ENCODE measurements at regions of chr10 and their contacts with region 1.

Region 1: GRCh38 chr10:17430647-17431355 is 23.6 kb downstream of the ST8SIA6 start:
- DNase-seq: no peak
- H3K4me3 ChIP-seq: no peak overlapping the region
- H3K27ac ChIP-seq: no peak overlapping the region
- H3K4me1 ChIP-seq: peaks cover 0 to 6% (median 4%) of the 10 kb centered on the region in 4 donors
- H3K27me3 ChIP-seq: peaks cover 0 to 40% (median 0%) of the 10 kb centered on the region in 4 donors
- CTCF ChIP-seq: peak; percentile 74 to 92 (median 79)
- EP300 ChIP-seq: no peak
- POLR2A ChIP-seq: no peak

Region 2: DNA sequence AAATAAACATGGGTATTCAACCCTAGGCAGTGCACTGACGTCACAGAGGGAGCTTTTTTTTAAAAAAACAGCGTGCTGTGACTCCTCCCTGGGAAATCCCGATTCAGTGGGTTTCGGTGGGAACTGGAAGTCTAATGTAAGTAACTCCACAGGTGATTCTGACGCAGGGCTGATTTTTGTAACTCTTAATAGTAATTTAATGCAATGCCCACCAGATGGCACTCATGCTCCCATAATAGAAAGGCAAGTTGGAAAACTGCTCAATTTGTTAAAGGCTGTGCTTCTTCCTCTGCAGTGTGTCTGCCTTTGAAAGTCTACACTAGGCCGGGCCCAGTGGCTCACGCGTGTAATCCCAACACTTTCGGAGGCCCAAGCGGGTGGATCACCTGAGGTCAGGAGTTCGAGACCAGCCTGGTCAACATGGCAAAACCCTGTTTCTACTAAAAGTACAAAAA is 602.7 kb before region 1 on chr10:
- intact Hi-C with region 1: loop called (anchors 5 kb)
- DNase-seq: no peak
- H3K4me3 ChIP-seq: peak overlapping the region in 1 of 4 donors; percentile 12
- H3K27ac ChIP-seq: peak overlapping the region in 3 of 4 donors; percentile 35 to 62 (median 53)
- H3K4me1 ChIP-seq: peaks cover 9 to 25% (median 21%) of the 10 kb centered on the region in 4 donors
- H3K27me3 ChIP-seq: no peaks in the 10 kb centered on the region
- CTCF ChIP-seq: peak; percentile 47 to 68 (median 47)
- EP300 ChIP-seq: no peak
- POLR2A ChIP-seq: no peak

Region 3: DNA sequence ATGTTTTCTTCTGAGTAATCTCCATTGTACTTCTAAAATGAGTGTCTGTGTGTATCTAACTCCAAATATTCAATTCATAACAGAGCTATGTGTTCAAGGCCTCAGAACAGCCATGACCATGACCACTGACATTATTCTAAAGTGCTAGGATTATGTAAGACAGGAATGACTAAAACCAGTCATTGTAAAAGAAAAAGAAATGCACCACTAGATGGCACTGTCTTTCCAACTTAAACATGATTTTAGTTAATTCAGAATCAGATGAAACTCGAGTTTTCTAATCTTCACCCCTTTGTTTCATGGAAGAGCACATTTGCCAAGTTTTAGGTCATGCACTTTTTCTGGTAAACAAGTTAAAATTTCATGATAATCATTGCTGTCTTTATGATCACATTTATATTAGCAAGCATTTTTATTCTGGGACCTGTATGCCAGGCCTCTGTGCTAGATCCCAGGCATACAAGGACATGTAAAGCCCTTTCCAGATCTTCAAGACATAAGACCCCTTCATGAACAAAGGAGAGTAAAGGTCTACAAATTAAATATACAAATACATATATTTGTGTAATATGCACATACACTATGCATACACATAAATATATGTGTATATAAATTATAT is 587.4 kb before region 1 on chr10:
- intact Hi-C with region 1: loop called (anchors 5 kb)
- DNase-seq: no peak
- H3K4me3 ChIP-seq: no peak overlapping the region
- H3K27ac ChIP-seq: no peak overlapping the region
- H3K4me1 ChIP-seq: peaks cover 0 to 3% (median 0%) of the 10 kb centered on the region in 4 donors
- H3K27me3 ChIP-seq: no peaks in the 10 kb centered on the region
- CTCF ChIP-seq: peak; percentile 61 to 76 (median 67)
- EP300 ChIP-seq: no peak
- POLR2A ChIP-seq: no peak

Region 4: DNA sequence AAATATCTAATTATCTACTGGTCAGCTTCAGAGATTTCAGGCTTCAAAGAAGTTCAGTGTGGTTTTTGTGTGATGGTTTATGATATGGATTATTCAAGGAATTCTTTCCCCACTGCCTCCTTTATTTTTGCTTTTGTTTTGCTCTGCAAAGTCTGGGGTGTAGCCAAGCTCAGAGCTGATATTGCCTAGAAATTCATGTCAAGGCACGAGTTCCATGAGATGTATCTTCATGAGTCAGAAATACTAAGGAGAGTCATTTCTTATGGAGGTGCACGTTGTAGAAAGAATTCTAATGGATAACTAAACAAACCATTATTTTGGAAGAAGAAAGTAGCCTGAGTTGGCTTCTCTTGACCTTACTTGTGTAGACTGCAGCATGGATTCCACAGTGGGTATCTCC is 165.3 kb before region 1 on chr10:
- intact Hi-C with region 1: loop called (anchors 10 kb)
- DNase-seq: no peak
- H3K4me3 ChIP-seq: no peak overlapping the region
- H3K27ac ChIP-seq: no peak overlapping the region
- H3K4me1 ChIP-seq: no peaks in the 10 kb centered on the region
- H3K27me3 ChIP-seq: peaks cover 0 to 18% (median 0%) of the 10 kb centered on the region in 4 donors
- CTCF ChIP-seq: no peak
- EP300 ChIP-seq: no peak
- POLR2A ChIP-seq: no peak

Measured in esophagus muscularis mucosa (tissue), 4 donors.